CD4-positive, alpha-beta T cell (primary cell): ENCODE measurements at regions of chr4 and their contacts with region 1.

Region 1: DNA sequence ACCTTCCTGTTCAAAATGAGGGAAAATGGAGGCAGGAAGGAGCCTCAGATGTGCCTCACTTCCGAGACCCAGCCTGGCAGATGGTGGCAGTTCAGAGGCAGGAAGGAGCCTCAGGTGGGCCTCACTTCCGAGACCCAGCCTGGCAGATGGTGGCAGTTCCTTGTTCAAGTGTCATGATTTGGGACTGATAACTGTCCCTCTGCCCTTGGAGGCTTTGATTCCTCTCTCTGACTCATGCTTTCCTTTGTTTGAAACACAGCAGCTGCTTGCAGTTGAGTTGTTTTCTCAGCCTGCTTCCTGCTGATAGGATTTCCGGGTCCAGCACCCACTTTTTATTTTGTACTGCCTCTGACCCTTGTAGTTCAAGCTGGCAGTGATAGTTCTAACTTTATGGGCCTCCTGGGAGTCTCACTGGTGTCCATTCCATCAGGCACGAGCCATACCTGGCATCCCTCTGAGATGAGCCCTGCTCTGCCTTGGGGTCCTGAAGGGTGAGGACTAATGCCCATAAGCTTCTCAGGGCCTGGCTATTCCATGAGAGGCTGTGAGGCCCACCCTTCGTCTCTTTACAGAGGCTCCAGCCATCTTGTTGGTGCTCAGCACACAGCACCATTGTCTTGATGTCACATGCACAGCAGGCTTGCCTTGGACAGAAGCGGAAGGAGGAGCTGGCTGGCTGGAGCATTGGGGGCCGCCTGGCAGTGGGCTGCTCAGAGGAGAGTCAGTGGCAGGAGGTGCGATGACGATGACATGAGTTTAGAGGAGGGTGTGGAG is 13.0 kb downstream of the RGS12 start:
- DNase-seq: peak in 6 of 14 experiments; percentile 16 to 44 (median 33)
- ATAC-seq: no peak
- H3K4me3 ChIP-seq: no peak overlapping the region
- H3K4me3 Mint-ChIP-seq: peak overlapping the region; percentile 65
- H3K27ac ChIP-seq: no peak overlapping the region
- H3K27ac Mint-ChIP-seq: peak overlapping the region; percentile 85
- H3K4me1 ChIP-seq: peaks cover 52% of the 10 kb centered on the region
- H3K4me1 Mint-ChIP-seq: peaks cover 72% of the 10 kb centered on the region
- H3K27me3 ChIP-seq: no peaks in the 10 kb centered on the region
- H3K27me3 Mint-ChIP-seq: no peaks in the 10 kb centered on the region
- CTCF ChIP-seq: no peak

Region 2: DNA sequence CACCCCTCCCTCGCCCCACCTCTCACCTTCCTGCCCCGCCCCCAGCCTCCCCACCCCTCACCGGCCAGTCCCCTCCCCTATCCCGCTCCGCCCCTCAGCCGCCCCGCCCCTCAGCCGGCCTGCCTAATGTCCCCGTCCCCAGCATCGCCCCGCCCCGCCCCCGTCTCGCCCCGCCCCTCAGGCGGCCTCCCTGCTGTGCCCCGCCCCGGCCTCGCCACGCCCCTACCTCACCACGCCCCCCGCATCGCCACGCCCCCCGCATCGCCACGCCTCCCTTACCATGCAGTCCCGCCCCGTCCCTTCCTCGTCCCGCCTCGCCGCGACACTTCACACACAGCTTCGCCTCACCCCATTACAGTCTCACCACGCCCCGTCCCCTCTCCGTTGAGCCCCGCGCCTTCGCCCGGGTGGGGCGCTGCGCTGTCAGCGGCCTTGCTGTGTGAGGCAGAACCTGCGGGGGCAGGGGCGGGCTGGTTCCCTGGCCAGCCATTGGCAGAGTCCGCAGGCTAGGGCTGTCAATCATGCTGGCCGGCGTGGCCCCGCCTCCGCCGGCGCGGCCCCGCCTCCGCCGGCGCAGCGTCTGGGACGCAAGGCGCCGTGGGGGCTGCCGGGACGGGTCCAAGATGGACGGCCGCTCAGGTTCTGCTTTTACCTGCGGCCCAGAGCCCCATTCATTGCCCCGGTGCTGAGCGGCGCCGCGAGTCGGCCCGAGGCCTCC is 231.5 kb before region 1 on chr4 and contains the starts of genes HTT and HTT-AS:
- CTCF ChIA-PET with region 1: no interaction called
- POLR2A ChIA-PET with region 1: no interaction called
- intact Hi-C with region 1: no loop called
- DNase-seq: peak; percentile 93 to 99 (median 98)
- ATAC-seq: peak; percentile 84
- H3K4me3 ChIP-seq: peak within 1 kb of the TSS; percentile 80
- H3K4me3 Mint-ChIP-seq: peak within 1 kb of the TSS; percentile 92
- H3K27ac ChIP-seq: peak within 1 kb of the TSS; percentile 72 to 87
- H3K27ac Mint-ChIP-seq: peak within 1 kb of the TSS; percentile 86
- H3K4me1 ChIP-seq: peaks cover 23% of the 10 kb centered on the region
- H3K4me1 Mint-ChIP-seq: peaks cover 26% of the 10 kb centered on the region
- H3K27me3 ChIP-seq: no peaks in the 10 kb centered on the region
- H3K27me3 Mint-ChIP-seq: no peaks in the 10 kb centered on the region
- CTCF ChIP-seq: no peak
- total RNA-seq, gene HTT: 56.9 to 62.6 TPM
- total RNA-seq, gene HTT-AS: not detected

Region 3: GRCh38 chr4:3201718-3202702 is 103.8 kb before region 1 on chr4:
- CTCF ChIA-PET with region 1: no interaction called
- POLR2A ChIA-PET with region 1: interaction called, 4 read pairs
- intact Hi-C with region 1: loop called in 1 of 2 experiments (anchors 1 kb)
- DNase-seq: peak; percentile 42 to 96 (median 67)
- ATAC-seq: peak; percentile 97
- H3K4me3 ChIP-seq: peak overlapping the region; percentile 26
- H3K4me3 Mint-ChIP-seq: peak overlapping the region; percentile 74
- H3K27ac ChIP-seq: peak overlapping the region; percentile 42 to 43
- H3K27ac Mint-ChIP-seq: peak overlapping the region; percentile 78
- H3K4me1 ChIP-seq: peaks cover 48% of the 10 kb centered on the region
- H3K4me1 Mint-ChIP-seq: peaks cover 58% of the 10 kb centered on the region
- H3K27me3 ChIP-seq: no peaks in the 10 kb centered on the region
- H3K27me3 Mint-ChIP-seq: no peaks in the 10 kb centered on the region
- CTCF ChIP-seq: no peak

Region 4: GRCh38 chr4:3292571-3293400 is 13.0 kb before region 1 on chr4 and contains the start of gene RGS12:
- CTCF ChIA-PET with region 1: interaction called, 3 read pairs
- POLR2A ChIA-PET with region 1: interaction called, 7 read pairs
- intact Hi-C with region 1: loop called in 1 of 2 experiments (anchors 1 kb)
- DNase-seq: peak; percentile 71 to 92 (median 82)
- ATAC-seq: peak; percentile 85
- H3K4me3 ChIP-seq: peak within 1 kb of the TSS; percentile 79
- H3K4me3 Mint-ChIP-seq: peak within 1 kb of the TSS; percentile 95
- H3K27ac ChIP-seq: no peak within 1 kb of the TSS
- H3K27ac Mint-ChIP-seq: peak within 1 kb of the TSS; percentile 78
- H3K4me1 ChIP-seq: peaks cover 29% of the 10 kb centered on the region
- H3K4me1 Mint-ChIP-seq: peaks cover 51% of the 10 kb centered on the region
- H3K27me3 ChIP-seq: peaks cover 0 to 8% of the 10 kb centered on the region in 2 experiments
- H3K27me3 Mint-ChIP-seq: peaks cover 10% of the 10 kb centered on the region
- CTCF ChIP-seq: no peak
- total RNA-seq, gene RGS12: 14.1 to 16.9 TPM

Region 5: DNA sequence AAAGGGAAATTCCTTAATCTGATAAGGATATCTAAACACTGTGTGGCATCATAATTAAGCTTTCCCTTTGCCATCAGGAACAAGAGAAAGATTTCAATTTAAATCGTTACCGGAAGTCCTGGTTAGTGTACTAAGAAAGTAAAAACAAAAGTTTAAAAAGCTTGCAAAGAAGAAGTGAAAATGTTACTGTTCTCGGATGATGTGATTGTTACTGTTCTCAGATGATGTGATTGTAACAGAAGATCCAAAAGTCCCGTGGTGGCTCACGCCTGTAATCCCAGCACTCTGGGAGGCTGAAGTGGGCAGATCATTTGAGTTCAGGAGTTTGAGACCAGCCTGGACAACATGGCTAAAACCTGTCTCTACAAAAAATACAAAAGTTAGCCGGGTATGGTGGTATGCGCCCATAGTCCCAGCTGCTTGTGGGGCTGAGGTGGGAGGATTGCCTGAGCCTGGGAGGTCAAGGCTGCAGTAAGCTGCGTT is 49.5 kb after region 1 on chr4:
- CTCF ChIA-PET with region 1: no interaction called
- POLR2A ChIA-PET with region 1: no interaction called
- intact Hi-C with region 1: loop called in 1 of 2 experiments (anchors 10 kb)
- DNase-seq: peak in 2 of 14 experiments; percentile 23 to 32
- ATAC-seq: no peak
- H3K4me3 ChIP-seq: no peak overlapping the region
- H3K4me3 Mint-ChIP-seq: peak overlapping the region; percentile 18
- H3K27ac ChIP-seq: no peak overlapping the region
- H3K27ac Mint-ChIP-seq: peak overlapping the region; percentile 53
- H3K4me1 ChIP-seq: peaks cover 5% of the 10 kb centered on the region
- H3K4me1 Mint-ChIP-seq: peaks cover 38% of the 10 kb centered on the region
- H3K27me3 ChIP-seq: no peaks in the 10 kb centered on the region
- H3K27me3 Mint-ChIP-seq: no peaks in the 10 kb centered on the region
- CTCF ChIP-seq: no peak